H1 (cell line): ENCODE measurements at regions of chr6 and their contacts with region 1.

Region 1: DNA sequence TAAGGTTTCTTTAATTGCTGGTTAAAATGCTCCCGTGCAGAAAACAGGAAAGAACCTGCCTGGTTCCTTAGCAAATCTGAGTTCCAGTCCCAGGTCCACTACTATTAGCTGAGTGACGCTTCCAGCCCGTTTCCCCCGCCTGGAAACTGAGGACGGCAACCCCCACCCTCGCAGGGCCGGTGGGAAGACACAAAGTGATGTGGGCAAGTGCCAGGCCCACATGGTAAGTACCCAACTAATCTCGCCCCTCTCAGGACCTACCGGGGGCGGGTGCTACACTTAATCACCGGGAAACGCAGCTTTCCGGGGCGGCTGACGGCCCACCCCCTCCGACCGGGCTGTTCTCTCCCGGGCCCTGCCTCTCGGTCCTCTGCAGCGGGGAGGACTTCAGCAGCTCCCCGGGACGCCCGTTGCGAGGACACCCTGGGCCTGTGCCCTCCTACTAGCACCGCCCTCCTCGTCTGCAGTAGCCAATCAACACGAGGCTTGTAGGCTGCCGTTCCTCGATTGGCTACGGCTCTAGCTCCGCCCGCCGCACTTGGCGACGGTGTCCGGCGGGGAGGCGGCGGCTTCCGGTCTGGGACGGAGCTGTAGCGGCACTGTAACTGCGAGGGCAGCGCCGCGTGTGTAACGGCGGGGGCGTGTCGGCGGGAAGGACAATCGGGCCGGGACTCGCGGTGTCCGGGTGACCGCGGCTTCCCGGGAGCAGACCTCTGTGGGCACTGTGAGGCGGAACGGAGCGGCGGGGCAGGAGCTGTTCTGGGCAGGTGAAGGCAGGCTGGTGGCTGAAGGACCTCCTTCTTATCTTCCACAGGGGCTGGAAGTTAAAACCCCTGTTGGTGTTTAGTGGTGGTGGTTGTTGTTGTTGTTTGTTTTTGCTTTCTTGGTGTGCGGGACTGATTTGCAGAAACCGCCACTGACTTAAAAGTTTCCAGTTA is at the start of gene ZBTB9:
- DNase-seq: peak; percentile 86 to 94
- H3K4me3 ChIP-seq: peak within 1 kb of the TSS; percentile 52 to 93 (median 88)
- H3K27ac ChIP-seq: peak within 1 kb of the TSS; percentile 32; the same call in 1 of the 2 replicates
- H3K4me1 ChIP-seq: peaks cover 0 to 5% (median 4%) of the 10 kb centered on the region in 4 experiments; a peak in 6 of 7 replicates
- H3K27me3 ChIP-seq: no peaks in the 10 kb centered on the region
- CTCF ChIP-seq: no peak
- EP300 ChIP-seq: no peak
- POLR2A ChIP-seq: peak; percentile 76 to 78
- RAD21 ChIP-seq: peak in 1 of 2 experiments; percentile 0; a peak in 1 of 4 replicates
- total RNA-seq, gene ZBTB9: 20.2 and 25.0 TPM in 2 replicates

Region 2: GRCh38 chr6:33391278-33391921 is 62.9 kb before region 1 on chr6 and contains the start of gene KIFC1:
- CTCF ChIA-PET with region 1: interaction called, 3 read pairs
- POLR2A ChIA-PET with region 1: interaction called, 10 read pairs
- DNase-seq: peak; percentile 99 to 100
- H3K4me3 ChIP-seq: peak within 1 kb of the TSS; percentile 81 to 82 (median 82)
- H3K27ac ChIP-seq: peak within 1 kb of the TSS; percentile 70; the same call in 1 of the 2 replicates
- H3K4me1 ChIP-seq: peaks cover 0 to 6% (median 3%) of the 10 kb centered on the region in 4 experiments; a peak in 4 of 7 replicates
- H3K27me3 ChIP-seq: no peaks in the 10 kb centered on the region
- CTCF ChIP-seq: peak; percentile 96 to 99 (median 99)
- EP300 ChIP-seq: 0 out of 3 replicates have a peak, but pooled peaks of 1 of the 2 experiments have one; percentile 18
- POLR2A ChIP-seq: peak in 1 of 2 experiments; percentile 43; a peak in 1 of 3 replicates
- RAD21 ChIP-seq: peak; percentile 38 to 57
- total RNA-seq, gene KIFC1: 64.3 and 69.3 TPM in 2 replicates

Region 3: DNA sequence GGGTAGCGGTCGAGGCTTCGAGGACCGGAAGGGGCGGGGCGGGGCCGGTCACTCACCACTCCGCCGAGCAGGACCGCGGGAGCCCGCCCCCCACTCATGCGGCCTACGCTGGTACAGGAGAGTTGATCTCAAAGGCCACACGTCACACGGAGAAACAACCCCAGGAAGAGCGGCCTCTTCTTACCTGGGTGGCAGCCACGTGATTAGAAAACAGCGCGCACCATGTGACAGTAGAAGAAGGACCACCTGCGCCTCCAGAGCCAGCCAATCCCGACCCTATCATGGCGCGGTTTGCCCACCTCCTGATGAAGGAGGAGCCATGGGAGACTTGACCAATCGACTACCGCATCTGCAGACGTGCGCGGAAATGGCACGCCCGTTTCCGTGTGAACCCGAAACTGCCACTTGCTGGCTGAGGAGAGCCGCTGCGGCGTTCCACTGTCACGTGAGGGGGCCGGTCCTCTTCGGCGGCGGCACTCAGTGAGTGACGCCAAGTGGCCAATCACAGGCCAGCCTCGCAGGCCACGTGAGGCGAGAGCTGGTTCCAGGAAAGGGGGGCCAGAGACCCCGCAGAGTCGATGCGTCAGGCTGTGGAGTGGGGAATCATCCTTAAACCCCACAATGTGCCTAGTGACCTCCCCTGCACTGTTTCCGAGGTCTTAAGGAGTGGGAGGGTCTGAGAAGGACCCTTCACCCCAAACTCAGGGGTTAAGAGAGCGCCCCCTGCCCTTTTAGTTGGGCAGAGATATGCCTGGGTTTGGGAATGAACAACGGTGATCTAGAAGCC is 36.2 kb before region 1 on chr6 and contains the start of gene CUTA:
- CTCF ChIA-PET with region 1: interaction called, 3 read pairs
- POLR2A ChIA-PET with region 1: interaction called, 16 read pairs
- DNase-seq: peak; percentile 92 to 99
- H3K4me3 ChIP-seq: peak within 1 kb of the TSS; percentile 75 to 99 (median 93)
- H3K27ac ChIP-seq: peak within 1 kb of the TSS; percentile 89
- H3K4me1 ChIP-seq: peaks cover 8 to 34% (median 15%) of the 10 kb centered on the region in 4 experiments
- H3K27me3 ChIP-seq: no peaks in the 10 kb centered on the region
- CTCF ChIP-seq: peak in 1 of 3 experiments; percentile 64; a peak in 2 of 4 replicates
- EP300 ChIP-seq: peak in 1 of 2 experiments; percentile 62; a peak in 1 of 3 replicates
- POLR2A ChIP-seq: 0 out of 3 replicates have a peak, but pooled peaks of 1 of the 2 experiments have one; percentile 4
- RAD21 ChIP-seq: peak in 1 of 2 experiments; percentile 5; a peak in 1 of 4 replicates
- total RNA-seq, gene CUTA: 297 and 315 TPM in 2 replicates

Region 4: GRCh38 chr6:33425668-33426577 is 28.4 kb before region 1 on chr6:
- CTCF ChIA-PET with region 1: interaction called, 7 read pairs
- POLR2A ChIA-PET with region 1: interaction called, 381 read pairs
- DNase-seq: peak in 1 of 2 experiments; percentile 93
- H3K4me3 ChIP-seq: peak overlapping the region; percentile 40 to 70 (median 55)
- H3K27ac ChIP-seq: peak overlapping the region; percentile 69; the same call in 1 of the 2 replicates
- H3K4me1 ChIP-seq: peaks cover 6 to 49% (median 19%) of the 10 kb centered on the region in 4 experiments
- H3K27me3 ChIP-seq: no peaks in the 10 kb centered on the region
- CTCF ChIP-seq: peak in 2 of 3 experiments; percentile 61 to 63; a peak in 3 of 4 replicates
- EP300 ChIP-seq: no peak
- POLR2A ChIP-seq: peak in 1 of 2 experiments; percentile 40; a peak in 1 of 3 replicates
- RAD21 ChIP-seq: peak; percentile 62 to 64

Region 5: GRCh38 chr6:33430991-33431879 is 23.0 kb before region 1 on chr6:
- CTCF ChIA-PET with region 1: interaction called, 7 read pairs
- POLR2A ChIA-PET with region 1: interaction called, 381 read pairs
- DNase-seq: peak in 1 of 2 experiments; percentile 93
- H3K4me3 ChIP-seq: peak overlapping the region; percentile 31 to 61 (median 56)
- H3K27ac ChIP-seq: peak overlapping the region; percentile 98
- H3K4me1 ChIP-seq: peaks cover 15 to 43% (median 28%) of the 10 kb centered on the region in 4 experiments
- H3K27me3 ChIP-seq: no peaks in the 10 kb centered on the region
- CTCF ChIP-seq: no peak
- EP300 ChIP-seq: peak in 1 of 2 experiments; percentile 88; a peak in 2 of 3 replicates
- POLR2A ChIP-seq: peak in 1 of 2 experiments; percentile 54; a peak in 2 of 3 replicates
- RAD21 ChIP-seq: no peak

Region 6: GRCh38 chr6:33439956-33440648 is 14.2 kb before region 1 on chr6:
- CTCF ChIA-PET with region 1: interaction called, 16 read pairs
- POLR2A ChIA-PET with region 1: interaction called, 381 read pairs
- DNase-seq: no peak
- H3K4me3 ChIP-seq: no peak overlapping the region
- H3K27ac ChIP-seq: no peak overlapping the region
- H3K4me1 ChIP-seq: no peaks in the 10 kb centered on the region; a peak in 1 of 7 replicates
- H3K27me3 ChIP-seq: no peaks in the 10 kb centered on the region
- CTCF ChIP-seq: no peak
- EP300 ChIP-seq: no peak
- POLR2A ChIP-seq: peak in 1 of 2 experiments; percentile 54; a peak in 1 of 3 replicates
- RAD21 ChIP-seq: no peak

Region 7: DNA sequence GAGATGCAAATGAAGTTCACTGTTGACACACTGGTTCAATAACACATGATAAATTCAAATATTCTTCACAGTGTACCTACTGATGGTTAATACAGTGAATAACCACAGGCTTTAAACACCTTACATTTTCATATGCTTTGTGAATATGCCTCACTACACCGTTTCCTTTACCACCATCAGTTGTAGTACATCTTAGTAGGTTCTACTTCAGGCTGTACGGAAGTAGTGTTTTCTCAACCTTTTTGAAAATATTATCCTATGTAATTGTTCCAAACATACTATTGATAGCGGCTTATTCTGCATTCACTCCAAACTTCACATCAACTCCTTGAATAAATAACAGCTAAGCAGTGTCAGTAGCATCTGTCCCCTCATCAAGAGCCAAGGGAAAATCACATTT is 15.4 kb after region 1 on chr6:
- CTCF ChIA-PET with region 1: interaction called, 3 read pairs
- POLR2A ChIA-PET with region 1: interaction called, 16 read pairs
- DNase-seq: no peak
- H3K4me3 ChIP-seq: no peak overlapping the region
- H3K27ac ChIP-seq: no peak overlapping the region
- H3K4me1 ChIP-seq: no peaks in the 10 kb centered on the region
- H3K27me3 ChIP-seq: no peaks in the 10 kb centered on the region
- CTCF ChIP-seq: no peak
- EP300 ChIP-seq: no peak
- POLR2A ChIP-seq: no peak
- RAD21 ChIP-seq: no peak